ENCODE measurements at regions of chr1 and their contacts with region 1.

Region 1: DNA sequence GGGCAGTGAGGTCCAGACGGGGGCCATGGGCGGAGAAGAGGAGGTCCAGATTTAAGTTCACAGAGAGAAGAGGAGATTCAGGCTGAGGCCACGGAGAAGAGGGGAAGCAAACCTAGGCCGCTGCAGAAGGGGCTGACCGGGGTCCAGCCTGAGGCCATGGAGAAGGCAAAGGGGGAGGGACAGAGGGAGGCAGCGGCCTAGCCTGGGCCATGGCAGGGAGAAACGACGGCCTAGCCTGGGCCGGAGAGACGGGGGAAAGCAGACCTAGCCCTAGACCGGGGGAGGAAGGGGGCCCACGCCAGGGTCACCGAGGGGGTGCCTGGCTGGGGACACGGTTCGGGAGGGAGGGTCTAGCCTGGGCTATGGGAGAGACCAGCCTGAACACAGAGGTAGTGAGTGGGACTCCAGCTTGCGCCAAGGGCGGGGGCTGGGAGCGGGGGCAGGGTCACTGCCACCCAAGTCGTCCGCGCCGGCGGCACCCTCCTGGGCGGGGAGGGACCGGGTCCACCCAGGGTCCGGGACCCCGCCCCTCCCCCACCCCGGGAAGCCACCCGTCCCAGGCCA is 459 bp downstream of the CAPZB start:
- DNase-seq: no peak
- H3K4me3 ChIP-seq: peak overlapping the region; percentile 93
- H3K27ac ChIP-seq: peak overlapping the region; percentile 98
- H3K4me1 ChIP-seq: peaks cover 12% of the 10 kb centered on the region
- H3K27me3 ChIP-seq: no peaks in the 10 kb centered on the region
- CTCF ChIP-seq: no peak

Region 2: GRCh38 chr1:19651141-19651737 is 166.4 kb after region 1 on chr1:
- intact Hi-C with region 1: loop called (anchors 5 kb)
- DNase-seq: no peak
- H3K4me3 ChIP-seq: no peak overlapping the region
- H3K27ac ChIP-seq: peak overlapping the region; percentile 43
- H3K4me1 ChIP-seq: peaks cover 33% of the 10 kb centered on the region
- H3K27me3 ChIP-seq: no peaks in the 10 kb centered on the region
- CTCF ChIP-seq: peak; percentile 33